Activated CD4-positive, alpha-beta T cell treated with anti-CD3 and anti-CD28 coated beads, Interleukin-2, amount 10 ng/mL, durations not matched to agents 24 days and 14 days (primary cell): ENCODE measurements at regions of chr1 and their contacts with region 1.

Region 1: DNA sequence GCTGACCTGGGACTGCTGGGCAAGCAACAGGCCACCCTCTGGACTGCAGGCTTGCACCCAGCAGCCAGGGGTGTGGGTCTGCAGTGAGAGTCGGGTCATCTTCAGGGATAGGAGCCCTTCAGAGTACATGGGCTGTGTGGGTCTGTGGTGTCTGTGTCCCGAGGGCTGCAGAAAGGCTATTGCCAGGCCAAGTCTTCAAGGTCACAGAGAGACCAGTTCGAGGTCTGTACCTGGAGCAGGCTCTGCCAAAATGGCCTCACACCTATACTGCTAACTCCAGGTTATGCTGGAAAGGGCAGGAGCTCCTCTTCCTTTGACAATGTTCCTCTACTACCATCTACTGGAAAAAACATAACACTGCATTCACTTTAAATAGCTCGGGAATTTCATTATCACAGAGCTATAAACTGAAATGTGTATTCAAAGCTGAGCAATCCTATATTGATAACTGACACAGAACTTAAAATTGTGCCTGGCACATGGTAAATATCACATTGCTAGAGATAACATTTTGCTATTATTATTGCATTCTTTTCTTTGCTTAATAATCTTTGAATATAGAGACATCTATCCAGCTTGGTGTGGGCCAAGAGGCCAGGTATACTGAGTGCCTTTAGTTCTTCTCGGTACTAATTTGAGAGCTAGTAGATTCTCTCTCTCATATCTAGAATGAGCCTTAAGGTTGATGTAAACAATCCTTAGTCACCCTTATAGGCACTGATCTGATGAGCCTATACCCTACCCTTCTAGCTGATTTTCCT is 6.9 kb upstream of the DNAH14 start:
- DNase-seq: no peak
- H3K4me3 Mint-ChIP-seq: no peak overlapping the region
- H3K27ac Mint-ChIP-seq: no peak overlapping the region
- H3K4me1 Mint-ChIP-seq: no peaks in the 10 kb centered on the region
- H3K27me3 Mint-ChIP-seq: peaks cover 2% of the 10 kb centered on the region

Region 2: DNA sequence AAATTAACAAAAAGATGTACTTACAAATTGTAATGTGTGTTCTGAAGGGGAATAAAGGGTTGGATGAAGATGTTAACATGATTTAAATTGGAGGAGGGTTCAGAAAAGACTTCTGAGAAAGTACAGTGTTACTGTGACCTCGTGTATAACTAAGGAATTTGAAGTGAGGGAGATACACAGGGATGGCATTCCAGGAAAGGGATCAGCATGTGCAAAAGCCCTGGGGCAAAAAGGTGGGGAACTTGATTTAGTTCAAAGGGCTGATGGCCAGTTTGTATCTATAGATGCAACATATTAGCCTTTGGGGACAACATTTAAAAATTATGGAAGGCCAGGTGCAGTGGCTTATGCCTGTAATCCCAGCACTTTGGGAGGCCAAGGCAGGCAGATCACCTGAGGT is 772.9 kb before region 1 on chr1:
- intact Hi-C with region 1: loop called (anchors 10 kb)
- DNase-seq: no peak
- H3K4me3 Mint-ChIP-seq: no peak overlapping the region
- H3K27ac Mint-ChIP-seq: no peak overlapping the region
- H3K4me1 Mint-ChIP-seq: peaks cover 13% of the 10 kb centered on the region
- H3K27me3 Mint-ChIP-seq: no peaks in the 10 kb centered on the region

Region 3: DNA sequence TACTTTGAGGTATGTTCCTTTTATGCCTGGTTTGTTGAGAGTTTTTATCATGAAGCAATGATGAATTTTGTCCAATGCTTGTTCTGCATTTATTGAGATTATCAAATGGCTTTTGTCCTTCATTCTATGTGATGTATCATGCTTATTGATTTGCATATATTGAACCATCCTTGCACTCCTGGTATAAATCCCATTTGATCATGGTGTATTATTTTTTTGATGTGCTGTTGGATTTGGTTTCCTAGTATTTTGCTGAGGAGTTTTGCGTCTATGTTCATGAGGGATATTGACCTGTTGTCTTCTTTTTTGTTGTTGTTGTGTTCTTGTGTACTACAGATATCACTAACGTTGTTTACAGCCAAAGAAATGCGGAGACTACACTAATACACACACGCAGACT is 11.0 kb after region 1 on chr1:
- intact Hi-C with region 1: no loop called
- DNase-seq: no peak
- H3K4me3 Mint-ChIP-seq: no peak overlapping the region
- H3K27ac Mint-ChIP-seq: no peak overlapping the region
- H3K4me1 Mint-ChIP-seq: no peaks in the 10 kb centered on the region
- H3K27me3 Mint-ChIP-seq: peaks cover 17% of the 10 kb centered on the region

Region 4: DNA sequence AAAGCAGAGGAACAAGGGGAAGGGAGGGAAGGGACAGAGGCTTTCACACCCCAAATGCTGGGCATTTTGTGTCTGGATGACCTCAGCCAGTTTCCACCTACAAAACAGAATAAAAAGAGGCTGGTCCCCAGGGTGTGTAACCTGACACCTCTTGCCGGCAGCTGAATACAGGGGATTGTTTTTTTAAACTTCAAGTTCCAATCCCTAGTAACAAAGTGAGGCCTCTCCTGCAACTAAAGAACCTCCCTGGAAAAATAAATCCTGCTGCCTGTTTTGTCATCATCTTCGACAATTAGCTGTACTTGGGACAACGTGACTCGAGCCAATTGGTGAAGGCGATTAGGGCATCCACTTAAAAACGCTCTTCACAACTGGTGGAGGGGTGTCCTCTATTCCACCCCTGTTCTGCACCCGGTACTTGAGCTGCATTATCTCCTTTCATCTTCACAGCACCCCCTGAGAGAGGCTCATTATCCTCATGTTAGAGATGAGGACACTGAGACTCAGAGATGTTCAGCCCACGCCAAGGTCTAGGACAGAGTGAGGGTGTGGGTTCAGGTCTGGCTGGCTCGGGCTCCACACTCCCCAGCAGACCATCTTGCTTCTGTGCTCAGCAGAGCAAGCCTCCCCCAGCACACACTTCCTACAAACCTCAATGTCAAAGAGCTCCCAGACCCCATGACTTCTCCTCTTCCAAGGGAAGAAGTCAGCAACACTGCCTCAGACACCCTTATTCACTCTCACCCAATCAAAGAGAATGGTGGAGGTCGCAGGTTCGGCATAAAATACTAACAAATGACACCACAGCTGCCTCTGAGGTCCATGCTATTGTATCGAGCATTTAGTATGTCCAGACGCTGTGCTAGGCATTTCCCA is 1801.3 kb after region 1 on chr1:
- intact Hi-C with region 1: no loop called
- DNase-seq: peak; percentile 67
- H3K4me3 Mint-ChIP-seq: peak overlapping the region; percentile 78
- H3K27ac Mint-ChIP-seq: peak overlapping the region; percentile 90
- H3K4me1 Mint-ChIP-seq: peaks cover 70% of the 10 kb centered on the region
- H3K27me3 Mint-ChIP-seq: no peaks in the 10 kb centered on the region